ENCODE measurements at regions of chr3 and their contacts with region 1.

Region 1: DNA sequence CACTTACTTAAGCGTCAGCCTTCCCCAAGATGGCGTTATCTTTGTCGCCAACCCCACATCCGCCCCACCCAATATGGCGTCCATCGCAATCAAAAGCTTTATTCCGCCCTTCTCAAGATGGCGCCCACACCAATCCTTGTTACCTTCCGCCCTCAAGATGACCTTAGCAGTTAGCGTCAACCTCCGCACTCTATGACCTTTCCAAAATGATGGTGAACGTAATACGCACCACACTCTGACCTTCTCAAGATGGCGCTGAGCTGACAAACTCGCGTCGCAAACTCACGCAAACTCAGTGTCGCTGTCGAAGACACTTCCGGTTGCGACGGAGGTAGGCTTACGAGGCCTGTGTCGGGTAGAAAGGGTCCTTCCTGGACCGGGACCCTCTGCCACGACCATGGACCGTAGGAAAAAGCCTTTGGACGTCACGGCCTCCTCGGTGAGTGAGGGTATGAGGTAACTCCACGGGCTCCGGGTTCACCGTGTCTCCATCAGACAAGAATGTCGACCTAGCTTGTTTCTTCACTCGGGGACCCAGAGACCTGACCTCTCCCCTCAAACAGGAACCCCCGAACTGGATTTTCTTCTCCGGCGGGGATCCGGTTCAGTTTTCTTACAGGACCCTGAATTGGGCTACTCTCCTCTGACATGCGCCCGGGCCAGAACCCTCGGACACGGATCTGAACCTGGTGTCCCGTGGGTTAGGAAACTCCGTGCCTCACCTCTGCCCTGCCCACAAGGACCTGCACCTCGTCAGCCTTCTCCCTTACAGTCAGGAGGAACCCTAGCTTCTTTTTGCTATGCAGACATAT is at the start of gene CCDC174:
- DNase-seq: peak; percentile 87 to 97 (median 96)
- H3K4me3 ChIP-seq: peak within 1 kb of the TSS; percentile 82
- H3K4me3 Mint-ChIP-seq: peak within 1 kb of the TSS; percentile 80 to 98 (median 94)
- H3K27ac ChIP-seq: peak within 1 kb of the TSS; percentile 97
- H3K27ac Mint-ChIP-seq: peak within 1 kb of the TSS; percentile 64 to 100 (median 99)
- H3K4me1 ChIP-seq: peaks cover 33% of the 10 kb centered on the region
- H3K4me1 Mint-ChIP-seq: peaks cover 39 to 64% (median 52%) of the 10 kb centered on the region in 3 donors
- H3K27me3 ChIP-seq: no peaks in the 10 kb centered on the region
- H3K27me3 Mint-ChIP-seq: no peaks in the 10 kb centered on the region
- total RNA-seq, gene CCDC174: 16.8 to 18.2 TPM

Region 2: GRCh38 chr3:14780927-14781507 is 129.4 kb after region 1 on chr3:
- CTCF ChIA-PET with region 1: no interaction called
- POLR2A ChIA-PET with region 1: no interaction called
- DNase-seq: no peak
- H3K4me3 ChIP-seq: no peak overlapping the region
- H3K4me3 Mint-ChIP-seq: no peak overlapping the region
- H3K27ac ChIP-seq: no peak overlapping the region
- H3K27ac Mint-ChIP-seq: no peak overlapping the region
- H3K4me1 ChIP-seq: no peaks in the 10 kb centered on the region
- H3K4me1 Mint-ChIP-seq: no peaks in the 10 kb centered on the region
- H3K27me3 ChIP-seq: no peaks in the 10 kb centered on the region
- H3K27me3 Mint-ChIP-seq: peaks cover 15 to 30% of the 10 kb centered on the region in 2 donors

Region 3: DNA sequence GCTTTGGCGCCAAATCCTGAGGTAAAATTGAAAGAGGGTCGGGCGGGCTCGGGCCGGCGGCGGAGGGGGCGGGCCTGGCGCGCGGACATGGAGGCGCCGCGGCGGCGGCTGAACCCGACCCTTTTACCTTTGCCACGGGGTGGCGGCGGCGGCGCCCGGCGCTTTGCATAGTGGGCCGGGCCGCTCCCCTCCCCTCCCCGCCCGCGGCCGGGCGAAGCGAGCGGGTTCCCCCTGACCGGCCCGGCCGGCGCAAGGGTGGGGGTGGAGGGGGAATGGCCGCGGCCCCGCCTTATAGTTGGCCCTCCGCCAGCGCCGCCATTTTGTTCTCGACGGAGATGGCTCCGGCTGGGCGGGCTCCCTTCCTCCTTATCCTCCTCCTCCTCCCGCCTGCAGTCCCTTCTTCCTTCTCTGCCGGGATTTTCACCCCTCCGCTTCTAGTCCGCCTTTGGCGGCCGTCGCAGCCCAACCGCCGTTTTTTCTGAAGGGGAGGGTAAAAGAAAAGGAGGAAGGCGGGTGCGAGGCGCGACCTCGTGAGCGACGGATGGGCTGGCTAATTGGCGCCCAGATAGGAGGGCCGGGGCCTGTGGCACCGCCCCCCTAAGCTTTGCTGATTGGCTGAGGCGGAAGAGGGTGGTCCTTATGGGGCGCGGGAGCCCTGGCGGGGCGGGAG is 296.4 kb after region 1 on chr3:
- CTCF ChIA-PET with region 1: no interaction called
- POLR2A ChIA-PET with region 1: interaction called, 17 read pairs
- DNase-seq: peak; percentile 94 to 97 (median 96)
- H3K4me3 ChIP-seq: peak overlapping the region; percentile 94
- H3K4me3 Mint-ChIP-seq: peak overlapping the region; percentile 98 to 100 (median 100)
- H3K27ac ChIP-seq: peak overlapping the region; percentile 94
- H3K27ac Mint-ChIP-seq: peak overlapping the region; percentile 93 to 100 (median 100)
- H3K4me1 ChIP-seq: peaks cover 33% of the 10 kb centered on the region
- H3K4me1 Mint-ChIP-seq: peaks cover 52 to 84% (median 59%) of the 10 kb centered on the region in 3 donors
- H3K27me3 ChIP-seq: no peaks in the 10 kb centered on the region
- H3K27me3 Mint-ChIP-seq: no peaks in the 10 kb centered on the region

Region 4: GRCh38 chr3:14959359-14959943 is 307.8 kb after region 1 on chr3:
- CTCF ChIA-PET with region 1: no interaction called
- POLR2A ChIA-PET with region 1: no interaction called
- DNase-seq: peak in 2 of 5 donors; percentile 7 to 34
- H3K4me3 ChIP-seq: peak overlapping the region; percentile 17
- H3K4me3 Mint-ChIP-seq: peak overlapping the region; percentile 79 to 87 (median 85)
- H3K27ac ChIP-seq: no peak overlapping the region
- H3K27ac Mint-ChIP-seq: peak overlapping the region; percentile 75 to 94 (median 88)
- H3K4me1 ChIP-seq: peaks cover 14% of the 10 kb centered on the region
- H3K4me1 Mint-ChIP-seq: peaks cover 43 to 67% (median 64%) of the 10 kb centered on the region in 3 donors
- H3K27me3 ChIP-seq: no peaks in the 10 kb centered on the region
- H3K27me3 Mint-ChIP-seq: no peaks in the 10 kb centered on the region